ENCODE measurements at regions of chr17 and their contacts with region 1.

Region 1: DNA sequence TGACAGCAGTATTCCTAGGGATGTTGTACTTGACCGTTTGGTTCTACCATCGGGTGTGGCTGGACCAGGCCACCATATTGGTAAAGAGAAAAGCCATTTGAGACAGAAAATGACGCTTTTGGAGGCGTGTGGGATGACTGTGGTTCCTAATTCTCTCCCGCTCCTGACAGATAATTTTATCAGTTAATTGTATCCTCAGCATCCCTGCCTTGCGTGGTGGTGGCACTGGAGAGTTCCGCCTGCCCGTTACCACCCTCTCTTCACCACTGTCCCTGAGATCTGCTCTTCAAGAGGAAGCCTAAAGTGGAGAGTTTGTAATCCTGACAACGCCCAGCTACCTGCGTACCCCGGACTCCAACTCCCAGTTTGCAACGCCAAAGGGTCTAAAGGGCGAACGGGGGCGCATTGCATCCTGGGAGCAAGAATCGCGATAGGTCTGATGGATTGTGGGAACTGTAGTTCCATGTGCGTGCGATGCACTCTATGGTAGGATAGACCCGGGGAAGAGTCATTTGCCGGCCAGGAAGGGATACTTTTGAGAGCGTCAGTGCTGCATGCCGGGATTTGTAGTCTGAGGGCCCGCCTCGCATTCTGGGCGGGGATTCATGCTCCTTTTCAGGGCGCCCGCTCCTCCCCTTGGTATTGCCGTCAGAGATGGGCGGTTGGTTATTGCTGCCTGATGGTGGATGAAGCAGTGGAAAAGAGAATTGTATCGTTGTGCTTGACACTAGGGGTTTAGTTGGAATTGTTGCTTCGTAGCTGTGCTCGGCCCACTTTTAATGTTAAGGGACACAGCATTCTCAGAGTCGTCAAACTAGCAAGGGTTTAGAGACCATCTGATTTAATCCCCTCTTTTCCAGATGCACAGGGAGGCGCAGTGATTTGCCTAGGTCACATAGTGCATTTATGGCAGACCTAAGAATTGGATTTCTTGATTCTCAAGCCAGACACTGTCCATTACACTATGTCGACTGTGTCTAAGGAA is 965 bp upstream of the PHF12 start:
- DNase-seq: peak; percentile 79 to 99 (median 96)
- ATAC-seq: peak; percentile 82
- H3K4me3 ChIP-seq: peak overlapping the region; percentile 84
- H3K4me3 Mint-ChIP-seq: no peak overlapping the region
- H3K27ac ChIP-seq: peak overlapping the region; percentile 81
- H3K27ac Mint-ChIP-seq: no peak overlapping the region
- H3K4me1 ChIP-seq: peaks cover 19 to 26% of the 10 kb centered on the region in 2 donors
- H3K4me1 Mint-ChIP-seq: peaks cover 12 to 24% (median 14%) of the 10 kb centered on the region in 7 donors
- H3K27me3 ChIP-seq: no peaks in the 10 kb centered on the region
- H3K27me3 Mint-ChIP-seq: peaks cover 0 to 4% (median 0%) of the 10 kb centered on the region in 5 donors

Region 2: DNA sequence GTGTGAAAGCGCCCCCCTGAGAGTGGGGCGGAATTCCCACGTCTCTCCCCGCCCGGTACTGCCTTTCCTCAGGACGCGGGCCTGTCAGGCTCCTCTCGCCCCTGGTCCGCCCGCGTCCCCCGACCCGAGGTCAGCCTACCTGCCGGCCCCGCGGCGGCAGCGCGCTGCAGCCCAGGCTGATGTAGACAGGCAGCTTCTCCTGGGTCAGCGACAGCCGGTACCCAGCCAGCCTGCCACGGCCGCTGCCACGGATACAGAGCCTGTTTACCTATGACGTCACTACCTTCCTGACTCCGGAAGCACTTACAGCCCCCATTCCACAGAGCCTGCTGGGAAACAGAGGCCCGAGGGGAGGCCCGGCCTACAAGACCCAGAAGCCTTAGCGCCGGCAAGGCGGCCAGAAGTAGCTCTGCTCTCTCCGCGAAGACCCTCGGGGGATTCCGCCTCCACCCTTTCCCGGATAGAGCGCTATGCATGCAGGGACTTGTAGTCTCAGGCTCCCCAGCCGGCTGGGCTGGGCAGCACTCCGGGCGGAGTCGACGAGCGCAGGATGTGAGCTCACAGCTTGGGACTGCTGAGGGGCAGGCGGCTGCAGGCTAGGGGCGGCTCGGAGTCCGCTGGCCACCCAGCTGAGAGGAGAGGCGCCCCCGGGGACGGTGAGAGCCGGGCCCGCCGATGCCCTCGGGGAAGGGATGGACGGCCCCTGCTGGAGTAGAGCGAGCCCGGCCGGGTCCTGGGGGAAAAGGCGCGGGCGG is 616.9 kb before region 1 on chr17 and contains the starts of genes IFT20 and TNFAIP1:
- CTCF ChIA-PET with region 1: no interaction called
- POLR2A ChIA-PET with region 1: interaction called, 18 read pairs
- intact Hi-C with region 1: no loop called
- DNase-seq: peak; percentile 86 to 100 (median 98)
- ATAC-seq: peak; percentile 98
- H3K4me3 ChIP-seq: peak within 1 kb of the TSS; percentile 79
- H3K4me3 Mint-ChIP-seq: peak within 1 kb of the TSS; percentile 86 to 99 (median 97)
- H3K27ac ChIP-seq: peak within 1 kb of the TSS; percentile 95
- H3K27ac Mint-ChIP-seq: peak within 1 kb of the TSS; percentile 91 to 98 (median 97)
- H3K4me1 ChIP-seq: peaks cover 16 to 19% of the 10 kb centered on the region in 2 donors
- H3K4me1 Mint-ChIP-seq: peaks cover 31 to 63% (median 59%) of the 10 kb centered on the region in 7 donors
- H3K27me3 ChIP-seq: no peaks in the 10 kb centered on the region
- H3K27me3 Mint-ChIP-seq: no peaks in the 10 kb centered on the region
- total RNA-seq, gene IFT20: 24.7 to 56.2 (median 37.0) TPM
- total RNA-seq, gene TNFAIP1: 8.0 to 26.9 (median 25.9) TPM

Region 3: GRCh38 chr17:28710861-28711722 is 241.2 kb before region 1 on chr17:
- CTCF ChIA-PET with region 1: no interaction called
- POLR2A ChIA-PET with region 1: interaction called, 15 read pairs
- intact Hi-C with region 1: no loop called
- DNase-seq: peak; percentile 71 to 97 (median 85)
- ATAC-seq: peak; percentile 95
- H3K4me3 ChIP-seq: peak overlapping the region; percentile 95
- H3K4me3 Mint-ChIP-seq: peak overlapping the region; percentile 76 to 94 (median 92)
- H3K27ac ChIP-seq: peak overlapping the region; percentile 83
- H3K27ac Mint-ChIP-seq: peak overlapping the region; percentile 85 to 98 (median 93)
- H3K4me1 ChIP-seq: peaks cover 9 to 12% of the 10 kb centered on the region in 2 donors
- H3K4me1 Mint-ChIP-seq: peaks cover 12 to 29% (median 19%) of the 10 kb centered on the region in 7 donors
- H3K27me3 ChIP-seq: no peaks in the 10 kb centered on the region
- H3K27me3 Mint-ChIP-seq: peaks cover 0 to 14% (median 6%) of the 10 kb centered on the region in 5 donors

Region 4: DNA sequence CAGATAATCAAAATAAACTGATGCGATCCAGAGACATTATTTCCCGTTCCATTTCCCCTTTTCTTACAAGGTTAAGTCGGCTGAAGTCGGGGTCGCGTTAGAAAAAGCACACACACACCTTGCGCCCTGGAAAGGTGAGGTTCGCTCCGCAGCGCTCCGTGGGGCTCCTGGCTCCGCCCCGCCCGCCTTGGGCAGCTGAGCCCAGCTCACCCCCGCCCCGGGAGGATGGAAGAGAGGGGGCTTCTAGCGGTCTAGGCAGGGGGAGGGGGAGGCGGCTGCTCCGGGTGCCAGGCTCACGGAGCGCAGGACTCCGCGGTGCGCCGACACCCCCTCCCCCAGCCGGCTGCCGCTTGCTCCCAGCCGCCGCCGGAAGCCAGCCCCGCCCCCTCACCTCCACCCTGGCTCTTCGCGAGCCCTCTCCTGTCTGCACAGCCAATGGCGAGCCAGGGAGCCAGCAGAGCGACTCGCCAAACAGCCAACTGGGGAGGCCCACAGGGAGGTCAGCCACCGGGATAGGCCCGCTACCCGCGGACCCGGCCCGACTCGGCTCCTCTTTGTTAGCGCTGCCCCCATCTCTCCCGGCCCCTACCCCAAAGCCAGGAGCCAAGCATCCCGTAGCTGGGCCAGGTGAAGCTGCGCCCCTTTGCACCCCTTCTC is 140.1 kb before region 1 on chr17:
- CTCF ChIA-PET with region 1: interaction called, 5 read pairs
- POLR2A ChIA-PET with region 1: interaction called, 6 read pairs
- intact Hi-C with region 1: loop called (anchors 1 kb)
- DNase-seq: peak; percentile 91 to 97 (median 95)
- ATAC-seq: peak; percentile 100
- H3K4me3 ChIP-seq: peak overlapping the region; percentile 85
- H3K4me3 Mint-ChIP-seq: peak overlapping the region; percentile 87 to 99 (median 92)
- H3K27ac ChIP-seq: peak overlapping the region; percentile 96
- H3K27ac Mint-ChIP-seq: peak overlapping the region; percentile 82 to 100 (median 97)
- H3K4me1 ChIP-seq: peaks cover 0 to 16% of the 10 kb centered on the region in 2 donors
- H3K4me1 Mint-ChIP-seq: peaks cover 21 to 49% (median 40%) of the 10 kb centered on the region in 7 donors
- H3K27me3 ChIP-seq: no peaks in the 10 kb centered on the region
- H3K27me3 Mint-ChIP-seq: no peaks in the 10 kb centered on the region

Region 5: DNA sequence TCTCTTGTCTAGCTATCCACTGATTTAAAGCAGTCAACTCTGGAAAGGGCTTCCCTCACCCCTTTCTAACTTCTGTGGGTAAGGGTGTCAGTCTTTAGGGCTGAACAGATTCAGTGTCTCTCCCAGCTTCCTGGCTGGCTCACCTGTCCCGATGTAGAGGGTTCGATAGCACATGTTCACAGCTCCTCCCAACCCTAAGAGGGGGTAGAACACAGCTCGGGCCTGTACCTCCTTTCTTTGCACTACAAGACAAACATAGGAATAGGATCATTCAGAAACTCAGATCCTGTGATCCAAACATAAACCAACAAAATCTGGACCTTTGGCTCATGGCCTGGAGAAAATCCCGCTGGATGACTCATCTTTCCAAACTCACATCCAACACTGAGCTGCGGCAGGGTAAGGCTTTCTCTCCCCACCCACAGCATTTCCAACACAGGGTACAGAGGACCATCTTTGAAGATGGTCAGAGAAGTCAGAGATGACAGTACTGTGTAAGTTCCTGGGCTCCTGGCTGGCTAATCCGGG is 43.6 kb before region 1 on chr17:
- CTCF ChIA-PET with region 1: interaction called, 3 read pairs
- POLR2A ChIA-PET with region 1: interaction called, 183 read pairs
- intact Hi-C with region 1: loop called (anchors 1 kb)
- DNase-seq: no peak
- ATAC-seq: no peak
- H3K4me3 ChIP-seq: no peak overlapping the region
- H3K4me3 Mint-ChIP-seq: no peak overlapping the region
- H3K27ac ChIP-seq: peak overlapping the region; percentile 3
- H3K27ac Mint-ChIP-seq: peak overlapping the region in 4 of 9 donors; percentile 4 to 52 (median 28)
- H3K4me1 ChIP-seq: no peaks in the 10 kb centered on the region
- H3K4me1 Mint-ChIP-seq: peaks cover 0 to 11% (median 0%) of the 10 kb centered on the region in 7 donors
- H3K27me3 ChIP-seq: no peaks in the 10 kb centered on the region
- H3K27me3 Mint-ChIP-seq: no peaks in the 10 kb centered on the region

Region 6: GRCh38 chr17:28973425-28973824 is 21.1 kb after region 1 on chr17:
- CTCF ChIA-PET with region 1: no interaction called
- POLR2A ChIA-PET with region 1: no interaction called
- intact Hi-C with region 1: no loop called
- DNase-seq: no peak
- ATAC-seq: no peak
- H3K4me3 ChIP-seq: no peak overlapping the region
- H3K4me3 Mint-ChIP-seq: no peak overlapping the region
- H3K27ac ChIP-seq: no peak overlapping the region
- H3K27ac Mint-ChIP-seq: no peak overlapping the region
- H3K4me1 ChIP-seq: no peaks in the 10 kb centered on the region
- H3K4me1 Mint-ChIP-seq: no peaks in the 10 kb centered on the region
- H3K27me3 ChIP-seq: no peaks in the 10 kb centered on the region
- H3K27me3 Mint-ChIP-seq: peaks cover 0 to 3% (median 0%) of the 10 kb centered on the region in 5 donors

Region 7: GRCh38 chr17:29039764-29040598 is 87.7 kb after region 1 on chr17:
- CTCF ChIA-PET with region 1: no interaction called
- POLR2A ChIA-PET with region 1: no interaction called
- intact Hi-C with region 1: no loop called
- DNase-seq: no peak
- ATAC-seq: no peak
- H3K4me3 ChIP-seq: no peak overlapping the region
- H3K4me3 Mint-ChIP-seq: no peak overlapping the region
- H3K27ac ChIP-seq: no peak overlapping the region
- H3K27ac Mint-ChIP-seq: no peak overlapping the region
- H3K4me1 ChIP-seq: no peaks in the 10 kb centered on the region
- H3K4me1 Mint-ChIP-seq: peaks cover 0 to 14% (median 0%) of the 10 kb centered on the region in 7 donors
- H3K27me3 ChIP-seq: no peaks in the 10 kb centered on the region
- H3K27me3 Mint-ChIP-seq: peaks cover 6 to 24% (median 11%) of the 10 kb centered on the region in 5 donors

Region 8: DNA sequence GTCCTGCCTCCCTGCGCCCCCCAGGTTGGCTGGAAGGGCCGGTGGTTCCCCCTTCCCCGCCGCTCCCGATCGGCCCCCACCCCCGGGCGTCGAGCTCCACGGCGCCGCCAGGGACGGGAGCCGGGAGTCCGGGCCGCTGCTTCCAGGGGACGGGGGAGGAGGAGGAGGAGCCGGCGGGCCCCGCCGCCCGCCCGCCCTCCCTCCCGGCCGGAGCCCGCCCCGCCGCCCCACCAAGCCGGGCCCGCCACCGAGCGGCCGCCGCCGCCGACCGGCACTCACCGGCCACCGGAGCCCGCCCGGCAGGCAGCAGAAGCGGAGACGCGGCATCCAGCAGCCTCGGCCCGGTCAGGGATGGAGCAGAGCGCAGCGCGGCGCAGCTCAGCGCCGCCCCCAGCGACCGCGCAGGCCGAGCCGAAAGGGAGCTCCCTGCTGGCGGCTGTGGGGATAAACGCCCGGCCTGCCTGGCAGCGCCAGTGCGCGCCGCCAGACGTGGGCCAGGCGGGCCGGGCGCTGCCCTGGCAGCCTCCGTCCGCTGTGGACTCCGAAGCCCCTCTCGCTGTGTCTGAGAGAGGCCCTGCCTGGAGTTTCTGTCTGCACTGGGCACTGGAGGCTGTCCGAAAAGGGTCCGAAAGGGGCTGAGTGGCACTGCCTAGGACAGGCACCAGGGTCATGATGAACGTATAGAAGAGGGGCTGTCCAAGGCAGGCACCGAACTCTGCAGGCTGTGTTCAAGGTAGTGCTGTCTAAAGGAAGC is 227.9 kb after region 1 on chr17 and contains the start of gene MYO18A:
- CTCF ChIA-PET with region 1: interaction called, 3 read pairs
- POLR2A ChIA-PET with region 1: interaction called, 4 read pairs
- intact Hi-C with region 1: loop called in 1 of 2 experiments (anchors 5 kb)
- DNase-seq: peak; percentile 58 to 85 (median 71)
- ATAC-seq: peak; percentile 98
- H3K4me3 ChIP-seq: peak within 1 kb of the TSS; percentile 37
- H3K4me3 Mint-ChIP-seq: peak within 1 kb of the TSS; percentile 40 to 82 (median 56)
- H3K27ac ChIP-seq: no peak within 1 kb of the TSS
- H3K27ac Mint-ChIP-seq: peak within 1 kb of the TSS in 7 of 9 donors; percentile 9 to 70 (median 48)
- H3K4me1 ChIP-seq: peaks cover 10 to 13% of the 10 kb centered on the region in 2 donors
- H3K4me1 Mint-ChIP-seq: peaks cover 5 to 33% (median 19%) of the 10 kb centered on the region in 7 donors
- H3K27me3 ChIP-seq: no peaks in the 10 kb centered on the region
- H3K27me3 Mint-ChIP-seq: peaks cover 0 to 13% (median 0%) of the 10 kb centered on the region in 5 donors
- total RNA-seq, gene MYO18A: 89.5 to 144 (median 103) TPM